Calu3 (cell line): ENCODE measurements at regions of chr2 and their contacts with region 1.

Region 1: DNA sequence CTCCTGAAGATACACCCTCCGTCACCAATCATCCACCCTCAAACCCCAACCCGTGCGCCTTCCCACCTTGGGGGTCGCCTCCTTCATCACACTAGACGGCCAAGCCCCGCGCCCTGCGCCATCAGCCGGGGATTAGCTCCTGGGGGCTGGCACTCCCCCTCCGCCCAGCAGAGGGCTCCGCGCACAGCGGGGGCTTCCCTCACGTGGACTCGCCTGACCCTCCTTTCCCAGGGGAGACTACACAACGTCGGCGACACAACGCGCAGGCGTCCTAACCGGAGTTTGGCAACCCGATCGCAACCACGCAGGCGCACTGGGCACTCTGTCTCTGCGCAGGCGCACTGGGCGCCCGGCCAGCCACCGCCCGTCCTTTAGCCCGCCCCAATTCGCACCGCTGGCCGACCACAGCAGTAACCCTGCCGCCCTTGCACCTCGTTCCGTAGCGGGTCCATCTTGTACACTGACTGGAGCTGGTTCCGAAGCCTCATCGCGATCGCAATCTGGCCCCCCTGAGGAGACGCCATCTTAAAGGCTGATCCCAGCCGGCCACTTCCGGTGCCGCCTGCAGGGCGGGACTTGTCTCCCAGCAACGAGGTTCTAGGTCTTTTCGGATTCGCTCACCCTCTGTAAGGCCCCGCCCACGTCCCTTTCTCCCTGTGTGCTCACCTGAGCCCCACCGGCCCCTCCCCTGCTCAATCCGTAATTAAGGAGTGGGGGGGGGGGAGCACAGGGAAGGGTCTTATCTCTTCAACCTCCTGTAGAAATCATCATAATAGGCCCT is at the start of gene PCGF1:
- DNase-seq: peak; percentile 98
- H3K4me3 Mint-ChIP-seq: peak within 1 kb of the TSS; percentile 97
- H3K27ac Mint-ChIP-seq: peak within 1 kb of the TSS; percentile 100
- H3K4me1 Mint-ChIP-seq: peaks cover 27% of the 10 kb centered on the region
- H3K27me3 Mint-ChIP-seq: peaks cover 38% of the 10 kb centered on the region
- CTCF ChIP-seq: no peak
- total RNA-seq, gene PCGF1: 25.9 TPM in 2 replicates

Region 2: GRCh38 chr2:74198461-74199274 is 308.7 kb before region 1 on chr2 and contains the start of gene MTHFD2:
- CTCF ChIA-PET with region 1: no interaction called
- intact Hi-C with region 1: no loop called
- DNase-seq: peak; percentile 96
- H3K4me3 Mint-ChIP-seq: peak within 1 kb of the TSS; percentile 95
- H3K27ac Mint-ChIP-seq: peak within 1 kb of the TSS; percentile 98
- H3K4me1 Mint-ChIP-seq: peaks cover 23% of the 10 kb centered on the region
- H3K27me3 Mint-ChIP-seq: no peaks in the 10 kb centered on the region
- CTCF ChIP-seq: peak; percentile 85
- total RNA-seq, gene MTHFD2: 177 and 205 TPM in 2 replicates

Region 3: DNA sequence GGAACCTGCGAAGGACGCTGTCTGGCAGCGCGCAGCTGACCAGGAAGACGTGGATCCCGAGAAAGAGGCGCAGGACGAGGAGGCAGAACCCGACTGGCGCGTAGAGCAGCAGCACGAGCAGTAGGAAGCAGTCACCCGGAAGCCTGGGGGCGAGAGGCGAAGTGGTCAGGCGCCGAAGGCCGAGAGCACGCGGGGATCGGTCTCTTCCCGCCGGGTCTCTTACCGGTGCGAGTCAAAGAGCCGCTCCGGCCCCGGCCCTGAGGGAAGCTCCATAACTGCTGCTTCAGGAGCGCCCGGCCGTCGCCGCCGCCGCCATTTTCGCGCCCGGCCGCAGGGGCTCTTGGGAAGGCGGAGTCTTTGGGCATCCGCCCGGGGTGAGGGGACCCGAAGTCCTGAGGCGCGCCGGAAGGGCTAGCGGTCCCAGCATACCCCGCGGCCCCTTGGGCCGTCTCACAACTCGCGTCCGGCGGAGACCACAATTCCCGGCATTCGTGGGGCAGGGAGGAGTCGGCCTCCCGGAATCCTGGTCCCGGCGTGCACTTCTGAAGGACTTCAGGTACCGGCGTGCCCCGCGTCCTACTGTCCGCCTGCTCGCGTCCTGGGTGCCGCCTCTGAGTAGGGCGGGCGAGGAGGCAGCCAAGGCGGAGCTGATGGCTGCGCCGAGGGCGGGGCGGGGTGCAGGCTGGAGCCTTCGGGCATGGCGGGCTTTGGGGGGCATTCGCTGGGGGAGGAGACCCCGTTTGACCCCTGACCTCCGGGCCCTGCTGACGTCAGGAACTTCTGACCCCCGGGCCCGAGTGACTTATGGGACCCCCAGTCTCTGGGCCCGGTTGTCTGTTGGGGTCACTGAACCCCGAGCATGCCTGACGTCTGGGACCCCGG is 22.3 kb after region 1 on chr2 and contains the starts of genes AUP1 and HTRA2:
- CTCF ChIA-PET with region 1: interaction called, 3 read pairs
- intact Hi-C with region 1: loop called (anchors 2 kb)
- DNase-seq: peak; percentile 98
- H3K4me3 Mint-ChIP-seq: peak within 1 kb of the TSS; percentile 95
- H3K27ac Mint-ChIP-seq: peak within 1 kb of the TSS; percentile 93
- H3K4me1 Mint-ChIP-seq: peaks cover 28% of the 10 kb centered on the region
- H3K27me3 Mint-ChIP-seq: no peaks in the 10 kb centered on the region
- CTCF ChIP-seq: no peak
- total RNA-seq, gene AUP1: 145 and 153 TPM in 2 replicates
- total RNA-seq, gene HTRA2: 23.4 and 26.3 TPM in 2 replicates